Prostate gland (tissue), 2 donors: ENCODE measurements at regions of chr11 and their contacts with region 1.

Region 1: DNA sequence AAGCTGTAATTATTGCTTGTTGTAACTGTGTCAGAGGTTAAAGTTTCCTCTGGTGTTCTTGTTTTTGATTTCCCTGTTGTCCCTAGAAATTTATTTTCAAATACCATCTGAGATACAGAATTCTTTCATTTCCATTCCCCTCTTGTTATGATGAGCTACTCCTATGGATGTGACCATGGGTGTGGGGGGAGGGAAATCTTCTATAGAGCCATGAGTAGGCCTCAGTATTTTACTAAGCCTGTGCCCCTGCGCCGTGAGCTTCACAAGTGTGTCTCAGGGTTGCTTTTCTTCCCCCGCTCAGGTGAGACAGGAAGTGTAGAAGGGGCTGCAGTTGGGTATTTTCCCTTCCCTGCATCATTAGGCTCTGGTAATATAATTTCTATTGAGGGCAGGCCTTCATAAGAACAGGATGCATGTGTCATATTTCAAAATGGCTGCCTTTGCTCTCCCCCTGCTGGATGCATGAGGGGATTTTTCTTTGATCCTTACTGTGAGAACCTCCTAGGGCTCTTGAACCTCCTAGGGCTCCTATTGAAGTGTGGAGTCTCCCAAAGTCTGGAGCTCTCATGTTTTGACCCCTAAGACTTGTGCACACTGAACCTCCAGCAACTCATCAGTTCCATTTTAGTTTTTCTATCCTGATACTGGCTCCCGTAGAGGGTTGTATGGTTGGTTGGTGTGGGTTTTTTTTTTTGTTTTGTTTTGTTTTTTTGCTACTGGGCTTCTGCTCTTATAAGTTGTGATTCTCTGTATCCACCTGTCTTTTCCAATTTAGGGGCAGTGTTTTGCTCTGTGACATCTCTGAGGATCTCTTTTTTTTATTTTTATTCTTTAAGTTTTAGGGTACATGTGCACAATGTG is 658.2 kb downstream of the NTM start:
- DNase-seq: no peak
- H3K4me3 ChIP-seq: no peak overlapping the region
- H3K27ac ChIP-seq: no peak overlapping the region
- H3K4me1 ChIP-seq: no peaks in the 10 kb centered on the region
- H3K27me3 ChIP-seq: no peaks in the 10 kb centered on the region
- CTCF ChIP-seq: peak in 1 of 4 experiments; percentile 57
- POLR2A ChIP-seq: no peak

Region 2: DNA sequence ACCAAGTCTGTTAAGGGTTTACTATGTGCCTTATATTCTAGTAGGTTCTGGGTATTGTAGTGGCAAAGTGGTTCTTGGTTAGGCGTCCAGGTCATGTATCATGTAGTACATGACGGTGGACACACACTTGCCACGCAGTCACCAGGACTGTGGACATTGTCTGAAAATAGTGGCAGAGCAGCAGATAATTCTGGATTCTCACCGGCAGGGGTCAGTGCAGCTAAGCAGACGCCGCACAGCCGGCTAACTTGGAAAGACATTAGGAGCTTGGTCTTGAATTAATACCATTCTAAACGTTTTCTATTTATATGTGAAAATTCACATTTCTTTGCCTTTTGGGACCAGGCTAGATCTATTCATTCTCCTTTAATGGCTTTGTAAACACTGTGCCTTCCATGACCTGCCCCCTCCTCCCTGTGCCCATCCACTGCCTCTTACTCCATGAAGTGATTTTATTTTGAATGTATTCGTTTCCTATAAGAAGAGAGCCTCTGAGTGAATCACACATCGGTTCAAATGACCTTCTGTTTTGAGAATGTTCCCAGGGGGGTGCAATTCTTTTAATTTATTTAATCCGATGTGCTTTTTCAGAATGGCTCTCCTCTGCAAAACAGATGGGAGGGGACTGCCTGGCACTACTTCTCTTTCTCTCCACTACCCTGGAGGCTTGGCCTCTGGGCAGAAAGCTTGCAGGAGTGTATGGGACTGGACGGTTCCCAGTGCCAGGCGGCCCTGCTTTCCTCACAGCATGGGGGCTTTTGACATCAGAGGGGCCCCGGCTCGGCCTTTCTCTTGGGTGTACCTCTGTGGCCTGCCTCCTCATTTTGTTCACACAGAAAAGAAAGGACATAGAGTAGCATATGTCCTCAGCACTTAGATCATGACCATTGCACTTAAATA is 280.2 kb before region 1 on chr11:
- intact Hi-C with region 1: loop called (anchors 5 kb)
- DNase-seq: no peak
- H3K4me3 ChIP-seq: no peak overlapping the region
- H3K27ac ChIP-seq: no peak overlapping the region
- H3K4me1 ChIP-seq: no peaks in the 10 kb centered on the region
- H3K27me3 ChIP-seq: peaks cover 2% of the 10 kb centered on the region
- CTCF ChIP-seq: peak in 3 of 4 experiments; percentile 48 to 55 (median 51)
- POLR2A ChIP-seq: no peak

Region 3: GRCh38 chr11:131867457-131868257 is 161.0 kb before region 1 on chr11:
- intact Hi-C with region 1: loop called (anchors 5 kb)
- DNase-seq: peak; percentile 35
- H3K4me3 ChIP-seq: no peak overlapping the region
- H3K27ac ChIP-seq: no peak overlapping the region
- H3K4me1 ChIP-seq: no peaks in the 10 kb centered on the region
- H3K27me3 ChIP-seq: peaks cover 2% of the 10 kb centered on the region
- CTCF ChIP-seq: peak in 3 of 4 experiments; percentile 45 to 64 (median 57)
- POLR2A ChIP-seq: no peak

Region 4: GRCh38 chr11:131977231-131977630 is 51.4 kb before region 1 on chr11:
- intact Hi-C with region 1: no loop called
- DNase-seq: no peak
- H3K4me3 ChIP-seq: no peak overlapping the region
- H3K27ac ChIP-seq: no peak overlapping the region
- H3K4me1 ChIP-seq: no peaks in the 10 kb centered on the region
- H3K27me3 ChIP-seq: no peaks in the 10 kb centered on the region
- CTCF ChIP-seq: no peak
- POLR2A ChIP-seq: no peak